ENCODE measurements at regions of chr10 and their contacts with region 1.

Region 1: DNA sequence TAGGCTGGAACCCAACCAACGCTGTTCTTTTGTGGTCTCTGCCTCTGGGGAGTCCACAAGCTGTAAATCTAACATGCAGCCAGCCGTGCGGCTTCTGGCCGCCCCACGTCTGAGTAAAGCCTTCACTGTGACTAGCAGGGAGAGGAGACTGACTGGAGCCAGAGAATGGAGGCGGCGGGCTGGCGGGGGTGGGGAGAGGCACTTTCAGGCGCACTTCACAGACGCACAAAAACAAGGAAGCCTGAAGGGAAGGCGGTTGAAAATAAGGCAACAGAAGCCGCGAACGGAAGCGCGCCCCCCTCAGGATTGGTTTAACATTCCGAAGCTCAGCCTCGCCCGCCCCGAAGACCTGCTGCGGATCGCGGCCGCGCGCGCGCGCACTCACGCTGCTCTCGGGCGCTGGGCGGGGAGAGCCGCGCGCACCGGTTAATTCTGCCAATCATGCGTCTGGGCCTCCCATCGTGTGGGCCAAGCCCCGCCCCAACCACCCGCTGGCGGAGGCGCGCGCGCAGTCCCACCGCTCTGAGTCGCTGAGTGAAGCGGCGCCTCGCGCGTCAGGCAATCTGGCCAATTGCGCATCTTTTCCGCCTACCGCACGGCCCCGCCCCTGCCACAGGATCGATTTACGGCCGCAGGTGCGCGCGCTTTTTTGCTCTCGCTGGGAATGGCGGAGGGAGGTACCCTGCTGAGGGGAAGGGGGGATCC is at the start of gene SFR1:
- DNase-seq: peak; percentile 99
- H3K4me3 Mint-ChIP-seq: peak within 1 kb of the TSS; percentile 80
- H3K27ac Mint-ChIP-seq: peak within 1 kb of the TSS; percentile 98
- H3K4me1 Mint-ChIP-seq: peaks cover 36% of the 10 kb centered on the region
- H3K27me3 Mint-ChIP-seq: peaks cover 7% of the 10 kb centered on the region
- total RNA-seq, gene SFR1: 17.8 to 18.7 TPM

Region 2: GRCh38 chr10:103584216-103585010 is 537.3 kb before region 1 on chr10:
- CTCF ChIA-PET with region 1: no interaction called
- POLR2A ChIA-PET with region 1: interaction called, 12 read pairs
- DNase-seq: peak; percentile 84
- H3K4me3 Mint-ChIP-seq: peak overlapping the region; percentile 87
- H3K27ac Mint-ChIP-seq: peak overlapping the region; percentile 83
- H3K4me1 Mint-ChIP-seq: peaks cover 21% of the 10 kb centered on the region
- H3K27me3 Mint-ChIP-seq: peaks cover 4% of the 10 kb centered on the region

Region 3: DNA sequence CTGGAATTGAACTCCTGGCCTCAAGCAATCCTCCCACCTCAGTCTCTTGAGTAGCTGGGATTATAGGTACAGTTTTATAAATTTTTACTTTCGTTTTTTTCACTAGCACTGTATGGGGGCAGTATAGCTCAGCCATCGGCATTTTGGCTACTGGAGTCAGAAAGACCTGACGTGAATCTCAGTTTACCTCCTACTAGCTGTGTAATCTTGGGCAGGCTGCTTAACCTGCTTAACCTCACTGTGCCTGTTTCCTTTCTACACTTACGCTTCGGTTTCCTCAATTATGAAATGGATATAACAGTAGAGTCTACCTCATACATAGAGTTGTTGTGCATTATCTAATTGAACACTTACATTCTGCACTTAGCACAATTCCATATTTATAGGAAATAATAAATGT is 220.4 kb before region 1 on chr10:
- CTCF ChIA-PET with region 1: interaction called, 10 read pairs
- POLR2A ChIA-PET with region 1: interaction called, 8 read pairs
- DNase-seq: no peak
- H3K4me3 Mint-ChIP-seq: peak overlapping the region; percentile 17
- H3K27ac Mint-ChIP-seq: peak overlapping the region; percentile 52
- H3K4me1 Mint-ChIP-seq: peaks cover 59% of the 10 kb centered on the region
- H3K27me3 Mint-ChIP-seq: no peaks in the 10 kb centered on the region

Region 4: DNA sequence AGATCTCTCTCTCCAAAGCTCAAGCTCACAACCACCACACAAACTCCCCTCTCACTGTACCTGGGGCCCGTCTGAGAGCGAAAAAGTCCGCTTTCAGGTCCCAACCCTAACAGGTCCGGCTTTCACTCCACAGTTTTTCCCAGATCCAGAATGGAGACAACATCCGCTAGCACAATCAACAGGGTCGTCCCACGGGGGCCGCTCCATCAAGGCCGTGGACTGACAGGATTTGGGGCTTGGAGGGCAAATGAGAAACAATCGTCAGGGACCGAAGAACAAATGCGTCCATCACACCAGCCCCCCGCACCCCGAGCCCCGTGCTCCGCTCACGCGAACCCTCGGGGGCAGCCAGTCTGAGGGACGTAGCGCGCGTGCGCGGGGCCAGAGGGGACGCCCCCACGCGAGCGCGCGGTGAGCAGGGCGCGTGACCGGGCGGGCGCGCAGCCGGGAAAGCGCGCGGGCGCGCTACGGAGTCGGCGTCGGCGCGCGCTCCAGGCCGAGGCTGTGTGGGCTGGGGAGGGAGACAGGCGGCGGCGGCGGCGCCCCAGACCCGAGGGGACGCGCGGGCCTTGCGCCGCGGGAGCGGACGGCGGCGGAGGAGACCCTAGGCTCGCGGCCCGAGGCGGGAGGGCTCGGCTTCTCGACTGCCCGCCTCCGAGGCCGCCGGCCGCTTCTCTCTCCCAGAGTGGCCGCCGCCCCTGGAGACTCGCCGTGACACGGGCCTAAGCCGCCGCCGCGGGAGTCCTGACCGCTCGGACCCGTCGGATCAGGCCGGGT is 154.8 kb before region 1 on chr10 and contains the start of gene SLK:
- CTCF ChIA-PET with region 1: interaction called, 11 read pairs
- POLR2A ChIA-PET with region 1: interaction called, 38 read pairs
- DNase-seq: peak; percentile 86
- H3K4me3 Mint-ChIP-seq: peak within 1 kb of the TSS; percentile 100
- H3K27ac Mint-ChIP-seq: peak within 1 kb of the TSS; percentile 86
- H3K4me1 Mint-ChIP-seq: peaks cover 33% of the 10 kb centered on the region
- H3K27me3 Mint-ChIP-seq: no peaks in the 10 kb centered on the region
- total RNA-seq, gene SLK: 32.7 to 36.3 TPM

Region 5: DNA sequence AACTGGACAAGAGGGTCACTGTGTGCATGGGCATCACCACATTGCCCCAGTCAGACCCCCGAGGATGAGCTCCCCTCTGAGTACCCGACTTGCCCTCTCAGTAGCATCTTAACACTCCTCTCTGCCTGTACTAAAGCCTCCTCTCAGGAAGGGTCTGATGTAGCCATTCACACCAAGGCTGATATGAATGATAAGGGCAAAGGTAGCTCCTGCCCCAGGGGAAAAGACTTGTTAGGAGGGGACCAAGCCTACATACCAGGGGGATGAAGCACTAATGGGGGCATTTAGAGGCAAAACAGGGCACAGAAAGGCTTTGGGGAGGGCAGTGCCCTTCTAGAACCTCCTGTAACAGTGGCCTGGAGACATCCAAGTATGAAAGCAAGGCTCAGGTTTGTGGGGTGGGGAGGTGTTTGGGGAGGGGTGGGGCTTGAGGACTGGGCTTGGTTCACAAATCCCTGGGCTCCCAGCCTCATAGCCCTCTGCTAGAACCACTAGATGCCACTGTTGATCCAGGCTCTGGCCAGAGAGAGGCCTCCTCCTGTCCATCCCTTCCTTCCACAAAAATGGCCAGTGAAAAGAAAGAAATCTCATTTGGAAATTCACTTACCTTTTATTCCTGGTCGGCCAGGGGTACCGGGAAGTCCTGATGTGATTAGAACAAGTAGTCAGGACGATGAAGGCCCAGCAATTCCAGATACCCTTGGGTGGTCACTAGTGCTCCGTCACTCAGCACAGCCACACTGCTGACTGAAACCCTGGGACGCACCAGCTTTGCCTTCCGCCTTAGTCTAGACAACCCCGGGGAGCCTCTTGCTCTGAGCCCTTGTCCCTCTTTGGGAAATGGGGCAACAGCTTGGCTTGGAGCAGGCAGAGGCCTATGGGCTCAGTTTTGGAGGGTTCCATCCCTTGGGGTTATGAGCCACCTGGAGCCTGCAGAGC is 76.3 kb before region 1 on chr10:
- CTCF ChIA-PET with region 1: no interaction called
- POLR2A ChIA-PET with region 1: no interaction called
- DNase-seq: peak; percentile 16
- H3K4me3 Mint-ChIP-seq: no peak overlapping the region
- H3K27ac Mint-ChIP-seq: no peak overlapping the region
- H3K4me1 Mint-ChIP-seq: peaks cover 7% of the 10 kb centered on the region
- H3K27me3 Mint-ChIP-seq: peaks cover 4% of the 10 kb centered on the region

Region 6: DNA sequence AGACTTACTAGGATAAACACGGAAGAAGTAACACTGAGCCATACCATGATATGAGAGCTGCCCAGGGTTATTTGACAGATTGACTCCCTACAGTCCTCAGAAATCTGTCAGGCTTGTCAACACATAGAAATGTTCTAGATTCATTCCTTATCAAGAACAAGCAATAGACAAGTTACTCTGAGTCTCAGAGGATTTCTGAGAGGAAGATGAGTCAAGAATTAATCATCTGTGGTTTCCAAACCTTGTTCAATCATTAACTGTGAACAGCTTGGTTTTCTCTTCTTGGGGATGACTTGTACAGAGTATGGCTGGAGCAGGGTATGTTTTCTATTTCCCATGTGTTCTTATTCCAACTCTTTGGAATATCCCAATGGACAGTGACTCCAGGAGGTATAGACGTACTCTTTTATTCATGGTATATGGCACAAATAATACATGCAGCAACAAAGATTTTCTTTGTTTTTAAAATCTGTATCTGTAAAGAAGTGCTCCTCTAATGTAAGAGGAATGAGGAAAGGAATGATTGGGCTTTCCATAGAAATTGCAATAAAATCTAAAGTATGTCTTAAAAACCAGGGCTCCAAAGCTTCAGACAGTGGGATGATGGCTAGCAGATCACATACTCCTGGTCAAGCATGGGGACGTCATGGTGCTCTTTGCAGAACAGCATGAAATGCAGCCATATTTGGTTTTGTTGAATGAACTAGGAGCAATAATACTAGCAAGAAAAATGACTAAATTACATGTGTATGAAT is 11.6 kb before region 1 on chr10:
- CTCF ChIA-PET with region 1: interaction called, 14 read pairs
- POLR2A ChIA-PET with region 1: interaction called, 20 read pairs
- DNase-seq: no peak
- H3K4me3 Mint-ChIP-seq: no peak overlapping the region
- H3K27ac Mint-ChIP-seq: no peak overlapping the region
- H3K4me1 Mint-ChIP-seq: peaks cover 12% of the 10 kb centered on the region
- H3K27me3 Mint-ChIP-seq: peaks cover 11% of the 10 kb centered on the region

Region 7: GRCh38 chr10:104274762-104275721 is 153.4 kb after region 1 on chr10:
- CTCF ChIA-PET with region 1: interaction called, 17 read pairs
- POLR2A ChIA-PET with region 1: interaction called, 4 read pairs
- DNase-seq: peak; percentile 53
- H3K4me3 Mint-ChIP-seq: peak overlapping the region; percentile 21
- H3K27ac Mint-ChIP-seq: no peak overlapping the region
- H3K4me1 Mint-ChIP-seq: peaks cover 6% of the 10 kb centered on the region
- H3K27me3 Mint-ChIP-seq: peaks cover 10% of the 10 kb centered on the region

Measured in activated CD4-positive, alpha-beta memory T cell treated with anti-CD3 and anti-CD28 coated beads, Interleukin-2, amount 10 ng/mL, durations not matched to agents 7 days and 5 days (primary cell).